ENCODE measurements at regions of chr1 and their contacts with region 1.

Region 1: GRCh38 chr1:212477014-212477679 is 44.4 kb downstream of the NENF start:
- DNase-seq: peak; percentile 83
- ATAC-seq: peak; percentile 91
- H3K4me3 Mint-ChIP-seq: no peak overlapping the region
- H3K27ac Mint-ChIP-seq: no peak overlapping the region
- H3K4me1 Mint-ChIP-seq: peaks cover 25% of the 10 kb centered on the region
- H3K27me3 Mint-ChIP-seq: peaks cover 19% of the 10 kb centered on the region

Region 2: GRCh38 chr1:212218911-212219310 is 258.2 kb before region 1 on chr1:
- CTCF ChIA-PET with region 1: no interaction called
- POLR2A ChIA-PET with region 1: no interaction called
- DNase-seq: no peak
- ATAC-seq: no peak
- H3K4me3 Mint-ChIP-seq: no peak overlapping the region
- H3K27ac Mint-ChIP-seq: no peak overlapping the region
- H3K4me1 Mint-ChIP-seq: peaks cover 19% of the 10 kb centered on the region
- H3K27me3 Mint-ChIP-seq: peaks cover 3% of the 10 kb centered on the region

Region 3: GRCh38 chr1:212284744-212285684 is 192.1 kb before region 1 on chr1 and contains the start of gene PPP2R5A:
- CTCF ChIA-PET with region 1: no interaction called
- POLR2A ChIA-PET with region 1: no interaction called
- DNase-seq: peak; percentile 99
- ATAC-seq: peak; percentile 94
- H3K4me3 Mint-ChIP-seq: peak within 1 kb of the TSS; percentile 99
- H3K27ac Mint-ChIP-seq: peak within 1 kb of the TSS; percentile 99
- H3K4me1 Mint-ChIP-seq: peaks cover 37% of the 10 kb centered on the region
- H3K27me3 Mint-ChIP-seq: no peaks in the 10 kb centered on the region
- total RNA-seq, gene PPP2R5A: 66.7 to 72.3 TPM

Region 4: GRCh38 chr1:212582799-212583615 is 105.9 kb after region 1 on chr1:
- CTCF ChIA-PET with region 1: interaction called, 10 read pairs
- POLR2A ChIA-PET with region 1: no interaction called
- DNase-seq: no peak
- ATAC-seq: no peak
- H3K4me3 Mint-ChIP-seq: no peak overlapping the region
- H3K27ac Mint-ChIP-seq: no peak overlapping the region
- H3K4me1 Mint-ChIP-seq: peaks cover 3% of the 10 kb centered on the region
- H3K27me3 Mint-ChIP-seq: peaks cover 31% of the 10 kb centered on the region

Region 5: GRCh38 chr1:212618501-212619405 is 141.6 kb after region 1 on chr1:
- CTCF ChIA-PET with region 1: interaction called, 10 read pairs
- POLR2A ChIA-PET with region 1: no interaction called
- DNase-seq: no peak
- ATAC-seq: no peak
- H3K4me3 Mint-ChIP-seq: no peak overlapping the region
- H3K27ac Mint-ChIP-seq: no peak overlapping the region
- H3K4me1 Mint-ChIP-seq: peaks cover 28% of the 10 kb centered on the region
- H3K27me3 Mint-ChIP-seq: no peaks in the 10 kb centered on the region

Region 6: GRCh38 chr1:212671342-212672031 is 194.3 kb after region 1 on chr1:
- CTCF ChIA-PET with region 1: interaction called, 65 read pairs
- POLR2A ChIA-PET with region 1: no interaction called
- DNase-seq: peak; percentile 20
- ATAC-seq: no peak
- H3K4me3 Mint-ChIP-seq: no peak overlapping the region
- H3K27ac Mint-ChIP-seq: no peak overlapping the region
- H3K4me1 Mint-ChIP-seq: peaks cover 37% of the 10 kb centered on the region
- H3K27me3 Mint-ChIP-seq: peaks cover 9% of the 10 kb centered on the region

Region 7: GRCh38 chr1:212782422-212783154 is 305.4 kb after region 1 on chr1:
- CTCF ChIA-PET with region 1: interaction called, 28 read pairs
- POLR2A ChIA-PET with region 1: no interaction called
- DNase-seq: no peak
- ATAC-seq: peak; percentile 57
- H3K4me3 Mint-ChIP-seq: no peak overlapping the region
- H3K27ac Mint-ChIP-seq: no peak overlapping the region
- H3K4me1 Mint-ChIP-seq: no peaks in the 10 kb centered on the region
- H3K27me3 Mint-ChIP-seq: no peaks in the 10 kb centered on the region

Measured in activated CD8-positive, alpha-beta T cell treated with anti-CD3 and anti-CD28 coated beads, Interleukin-2, amount 10 ng/mL, durations not matched to agents 7 days and 5 days (primary cell).